Endothelial cell of umbilical vein (primary cell): ENCODE measurements at regions of chr1 and their contacts with region 1.

Region 1: DNA sequence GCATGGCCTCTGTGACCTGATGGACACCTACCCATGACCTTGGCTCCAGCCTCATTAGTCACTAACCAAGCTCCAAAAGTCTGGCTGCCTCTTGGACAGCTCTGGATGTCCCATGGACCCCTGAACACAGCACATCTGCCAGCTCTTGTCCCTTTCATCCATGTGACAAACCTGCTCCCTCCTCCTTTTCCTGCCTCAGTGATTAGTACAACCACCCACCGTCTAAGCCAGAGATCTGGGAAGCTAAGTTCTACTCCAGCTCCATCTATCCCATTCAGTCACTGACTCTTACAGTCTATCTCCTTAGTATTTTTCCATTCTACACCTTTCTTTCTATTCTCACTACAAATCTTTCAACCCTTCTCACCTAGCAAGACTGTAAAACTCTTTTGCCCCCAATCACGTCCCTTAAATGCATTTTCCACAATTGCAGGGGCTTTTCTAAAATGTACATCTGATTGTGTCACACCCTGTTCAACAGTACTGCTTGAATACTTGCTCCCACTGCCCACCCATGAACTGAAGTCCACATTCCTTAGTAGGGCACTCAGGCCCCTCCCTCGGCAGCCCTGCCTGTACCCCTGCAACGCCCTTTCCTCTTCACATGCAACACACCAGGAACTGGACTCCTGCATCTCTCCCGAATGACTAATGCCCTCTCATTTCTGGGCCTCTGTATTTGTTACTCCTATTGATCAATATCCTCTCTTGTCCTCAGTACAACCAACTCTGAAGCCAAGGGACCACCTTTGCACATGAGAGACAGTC is 7.2 kb downstream of the GPN2 start:
- DNase-seq: no peak
- H3K4me3 ChIP-seq: no peak overlapping the region
- H3K27ac ChIP-seq: no peak overlapping the region
- H3K4me1 ChIP-seq: no peaks in the 10 kb centered on the region
- H3K27me3 ChIP-seq: no peaks in the 10 kb centered on the region
- CTCF ChIP-seq: no peak
- POLR2A ChIP-seq: no peak

Region 2: DNA sequence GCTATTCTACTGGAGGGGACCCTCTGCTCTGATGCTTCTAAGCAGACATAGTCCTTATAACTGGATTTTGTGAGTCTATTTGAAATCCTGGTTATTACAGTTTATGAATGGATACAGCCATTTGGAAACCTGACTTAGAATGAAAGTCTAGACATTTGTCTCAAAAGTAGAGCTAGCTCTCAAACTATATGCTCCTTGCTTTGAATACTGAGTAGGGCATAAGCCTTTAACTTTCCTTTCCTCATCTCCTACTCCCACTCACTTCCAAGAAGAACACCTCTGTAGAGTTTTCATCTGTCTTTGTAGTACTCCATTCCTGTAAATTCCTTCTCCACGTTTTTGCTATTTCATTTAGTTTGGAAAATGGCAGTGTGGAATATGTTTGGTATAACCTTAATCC is 196.1 kb before region 1 on chr1:
- CTCF ChIA-PET with region 1: no interaction called
- POLR2A ChIA-PET with region 1: no interaction called
- dilution Hi-C with region 1: no loop called
- intact Hi-C with region 1: no loop called
- DNase-seq: no peak
- H3K4me3 ChIP-seq: no peak overlapping the region
- H3K27ac ChIP-seq: no peak overlapping the region
- H3K4me1 ChIP-seq: no peaks in the 10 kb centered on the region
- H3K27me3 ChIP-seq: no peaks in the 10 kb centered on the region
- CTCF ChIP-seq: no peak
- POLR2A ChIP-seq: no peak

Region 3: GRCh38 chr1:26811057-26811456 is 71.8 kb before region 1 on chr1:
- CTCF ChIA-PET with region 1: interaction called, 45 read pairs
- POLR2A ChIA-PET with region 1: no interaction called
- dilution Hi-C with region 1: no loop called
- intact Hi-C with region 1: loop called (anchors 1 kb)
- DNase-seq: no peak
- H3K4me3 ChIP-seq: no peak overlapping the region
- H3K27ac ChIP-seq: no peak overlapping the region
- H3K4me1 ChIP-seq: no peaks in the 10 kb centered on the region
- H3K27me3 ChIP-seq: no peaks in the 10 kb centered on the region
- CTCF ChIP-seq: no peak
- POLR2A ChIP-seq: no peak

Region 4: GRCh38 chr1:26853156-26853555 is 29.7 kb before region 1 on chr1:
- CTCF ChIA-PET with region 1: interaction called, 27 read pairs
- POLR2A ChIA-PET with region 1: no interaction called
- dilution Hi-C with region 1: no loop called
- intact Hi-C with region 1: loop called (anchors 1 kb)
- DNase-seq: peak; percentile 79
- H3K4me3 ChIP-seq: no peak overlapping the region
- H3K27ac ChIP-seq: no peak overlapping the region
- H3K4me1 ChIP-seq: peaks cover 9% of the 10 kb centered on the region
- H3K27me3 ChIP-seq: no peaks in the 10 kb centered on the region
- CTCF ChIP-seq: peak; percentile 85 to 89
- POLR2A ChIP-seq: no peak

Region 5: GRCh38 chr1:26864610-26865527 is 18.0 kb before region 1 on chr1:
- CTCF ChIA-PET with region 1: interaction called, 17 read pairs
- POLR2A ChIA-PET with region 1: interaction called, 3 read pairs
- dilution Hi-C with region 1: no loop called
- intact Hi-C with region 1: loop called (anchors 1 kb)
- DNase-seq: peak; percentile 99
- H3K4me3 ChIP-seq: peak overlapping the region; percentile 38 to 73 (median 52)
- H3K27ac ChIP-seq: peak overlapping the region; percentile 91
- H3K4me1 ChIP-seq: peaks cover 11% of the 10 kb centered on the region
- H3K27me3 ChIP-seq: no peaks in the 10 kb centered on the region
- CTCF ChIP-seq: peak in 1 of 2 donors; percentile 8
- POLR2A ChIP-seq: peak; percentile 94

Region 6: GRCh38 chr1:27057801-27058625 is 175.1 kb after region 1 on chr1:
- CTCF ChIA-PET with region 1: no interaction called
- POLR2A ChIA-PET with region 1: no interaction called
- dilution Hi-C with region 1: no loop called
- intact Hi-C with region 1: no loop called
- DNase-seq: no peak
- H3K4me3 ChIP-seq: no peak overlapping the region
- H3K27ac ChIP-seq: no peak overlapping the region
- H3K4me1 ChIP-seq: no peaks in the 10 kb centered on the region
- H3K27me3 ChIP-seq: peaks cover 6 to 10% of the 10 kb centered on the region in 2 experiments
- CTCF ChIP-seq: no peak
- POLR2A ChIP-seq: no peak